Common myeloid progenitor, CD34-positive (primary cell): ENCODE measurements at regions of chr14 and their contacts with region 1.

Region 1: GRCh38 chr14:50099335-50099734 is 17.0 kb downstream of the VCPKMT start:
- DNase-seq: no peak
- H3K4me3 ChIP-seq: no peak overlapping the region
- H3K27ac ChIP-seq: no peak overlapping the region
- H3K4me1 ChIP-seq: peaks cover 2 to 11% (median 6%) of the 10 kb centered on the region in 4 experiments
- H3K27me3 ChIP-seq: no peaks in the 10 kb centered on the region

Region 2: GRCh38 chr14:49879683-49880204 is 219.6 kb before region 1 on chr14:
- CTCF ChIA-PET with region 1: interaction called, 10 read pairs
- POLR2A ChIA-PET with region 1: no interaction called
- DNase-seq: peak; percentile 84 to 92 (median 92)
- H3K4me3 ChIP-seq: no peak overlapping the region
- H3K27ac ChIP-seq: no peak overlapping the region
- H3K4me1 ChIP-seq: peaks cover 0 to 16% (median 5%) of the 10 kb centered on the region in 4 experiments
- H3K27me3 ChIP-seq: no peaks in the 10 kb centered on the region

Region 3: DNA sequence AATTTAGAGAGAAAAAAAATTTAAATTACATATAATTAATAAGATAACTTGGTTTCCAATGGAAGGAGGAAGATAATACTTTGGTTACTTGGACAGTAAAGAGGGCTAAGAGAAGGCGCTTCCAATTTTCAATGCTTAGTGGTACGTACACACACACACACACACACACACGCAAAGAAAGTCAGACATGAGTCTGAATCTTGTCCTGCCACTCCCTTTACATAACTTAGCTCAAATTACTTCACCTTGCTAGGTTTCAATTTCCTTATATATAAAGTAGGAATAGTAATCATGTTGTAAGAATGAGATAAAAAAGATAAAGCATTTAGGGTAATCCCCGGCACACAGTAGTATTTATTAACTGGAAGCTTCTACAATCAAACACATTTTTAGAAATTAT is 56.8 kb after region 1 on chr14:
- CTCF ChIA-PET with region 1: no interaction called
- POLR2A ChIA-PET with region 1: no interaction called
- DNase-seq: no peak
- H3K4me3 ChIP-seq: no peak overlapping the region
- H3K27ac ChIP-seq: no peak overlapping the region
- H3K4me1 ChIP-seq: no peaks in the 10 kb centered on the region
- H3K27me3 ChIP-seq: no peaks in the 10 kb centered on the region

Region 4: GRCh38 chr14:50231475-50232275 is 132.3 kb after region 1 on chr14 and contains the start of gene SOS2:
- CTCF ChIA-PET with region 1: no interaction called
- POLR2A ChIA-PET with region 1: no interaction called
- DNase-seq: peak; percentile 81 to 93 (median 87)
- H3K4me3 ChIP-seq: peak within 1 kb of the TSS; percentile 85 to 99 (median 88)
- H3K27ac ChIP-seq: peak within 1 kb of the TSS; percentile 68 to 86
- H3K4me1 ChIP-seq: peaks cover 14 to 22% (median 20%) of the 10 kb centered on the region in 4 experiments
- H3K27me3 ChIP-seq: no peaks in the 10 kb centered on the region